ENCODE measurements at regions of chr1 and their contacts with region 1.

Region 1: GRCh38 chr1:93846211-93846991 is 32.6 kb downstream of the DNTTIP2 start:
- DNase-seq: peak; percentile 74 to 91 (median 86)
- H3K4me3 ChIP-seq: peak overlapping the region; percentile 51
- H3K4me3 Mint-ChIP-seq: peak overlapping the region; percentile 87 to 100 (median 95)
- H3K27ac ChIP-seq: peak overlapping the region; percentile 85
- H3K27ac Mint-ChIP-seq: peak overlapping the region; percentile 76 to 100 (median 95)
- H3K4me1 ChIP-seq: peaks cover 18% of the 10 kb centered on the region
- H3K4me1 Mint-ChIP-seq: peaks cover 30 to 42% (median 34%) of the 10 kb centered on the region in 3 donors
- H3K27me3 ChIP-seq: no peaks in the 10 kb centered on the region
- H3K27me3 Mint-ChIP-seq: peaks cover 0 to 10% of the 10 kb centered on the region in 2 donors

Region 2: GRCh38 chr1:93304716-93305138 is 541.7 kb before region 1 on chr1:
- CTCF ChIA-PET with region 1: interaction called, 12 read pairs
- POLR2A ChIA-PET with region 1: no interaction called
- DNase-seq: peak in 4 of 5 donors; percentile 12 to 62 (median 36)
- H3K4me3 ChIP-seq: no peak overlapping the region
- H3K4me3 Mint-ChIP-seq: no peak overlapping the region
- H3K27ac ChIP-seq: no peak overlapping the region
- H3K27ac Mint-ChIP-seq: no peak overlapping the region
- H3K4me1 ChIP-seq: no peaks in the 10 kb centered on the region
- H3K4me1 Mint-ChIP-seq: peaks cover 0 to 4% (median 0%) of the 10 kb centered on the region in 3 donors
- H3K27me3 ChIP-seq: no peaks in the 10 kb centered on the region
- H3K27me3 Mint-ChIP-seq: no peaks in the 10 kb centered on the region

Region 3: GRCh38 chr1:93345633-93346420 is 500.6 kb before region 1 on chr1 and contains the start of gene DR1:
- CTCF ChIA-PET with region 1: no interaction called
- POLR2A ChIA-PET with region 1: interaction called, 11 read pairs
- DNase-seq: peak; percentile 87 to 92 (median 89)
- H3K4me3 ChIP-seq: peak within 1 kb of the TSS; percentile 92
- H3K4me3 Mint-ChIP-seq: peak within 1 kb of the TSS; percentile 93 to 100 (median 99)
- H3K27ac ChIP-seq: peak within 1 kb of the TSS; percentile 94
- H3K27ac Mint-ChIP-seq: peak within 1 kb of the TSS; percentile 88 to 100 (median 98)
- H3K4me1 ChIP-seq: peaks cover 29% of the 10 kb centered on the region
- H3K4me1 Mint-ChIP-seq: peaks cover 38 to 53% (median 48%) of the 10 kb centered on the region in 3 donors
- H3K27me3 ChIP-seq: no peaks in the 10 kb centered on the region
- H3K27me3 Mint-ChIP-seq: peaks cover 0 to 4% of the 10 kb centered on the region in 2 donors
- total RNA-seq, gene DR1: 108 to 114 TPM

Region 4: GRCh38 chr1:93629099-93630059 is 217.0 kb before region 1 on chr1:
- CTCF ChIA-PET with region 1: interaction called, 77 read pairs
- POLR2A ChIA-PET with region 1: interaction called, 6 read pairs
- DNase-seq: peak in 3 of 5 donors; percentile 18 to 54 (median 47)
- H3K4me3 ChIP-seq: no peak overlapping the region
- H3K4me3 Mint-ChIP-seq: no peak overlapping the region
- H3K27ac ChIP-seq: no peak overlapping the region
- H3K27ac Mint-ChIP-seq: no peak overlapping the region
- H3K4me1 ChIP-seq: no peaks in the 10 kb centered on the region
- H3K4me1 Mint-ChIP-seq: no peaks in the 10 kb centered on the region
- H3K27me3 ChIP-seq: no peaks in the 10 kb centered on the region
- H3K27me3 Mint-ChIP-seq: peaks cover 0 to 2% of the 10 kb centered on the region in 2 donors

Region 5: GRCh38 chr1:93804412-93804811 is 42.0 kb before region 1 on chr1:
- CTCF ChIA-PET with region 1: no interaction called
- POLR2A ChIA-PET with region 1: no interaction called
- DNase-seq: no peak
- H3K4me3 ChIP-seq: no peak overlapping the region
- H3K4me3 Mint-ChIP-seq: no peak overlapping the region
- H3K27ac ChIP-seq: no peak overlapping the region
- H3K27ac Mint-ChIP-seq: no peak overlapping the region
- H3K4me1 ChIP-seq: no peaks in the 10 kb centered on the region
- H3K4me1 Mint-ChIP-seq: no peaks in the 10 kb centered on the region
- H3K27me3 ChIP-seq: no peaks in the 10 kb centered on the region
- H3K27me3 Mint-ChIP-seq: peaks cover 2 to 4% of the 10 kb centered on the region in 2 donors

Region 6: GRCh38 chr1:93827633-93828366 is 18.6 kb before region 1 on chr1:
- CTCF ChIA-PET with region 1: no interaction called
- POLR2A ChIA-PET with region 1: no interaction called
- DNase-seq: no peak
- H3K4me3 ChIP-seq: no peak overlapping the region
- H3K4me3 Mint-ChIP-seq: no peak overlapping the region
- H3K27ac ChIP-seq: no peak overlapping the region
- H3K27ac Mint-ChIP-seq: peak overlapping the region in 1 of 8 donors; percentile 70
- H3K4me1 ChIP-seq: no peaks in the 10 kb centered on the region
- H3K4me1 Mint-ChIP-seq: no peaks in the 10 kb centered on the region
- H3K27me3 ChIP-seq: no peaks in the 10 kb centered on the region
- H3K27me3 Mint-ChIP-seq: peaks cover 0 to 5% of the 10 kb centered on the region in 2 donors

Region 7: GRCh38 chr1:93878889-93879586 is 32.6 kb after region 1 on chr1 and contains the start of gene DNTTIP2:
- CTCF ChIA-PET with region 1: interaction called, 12 read pairs
- POLR2A ChIA-PET with region 1: interaction called, 32 read pairs
- DNase-seq: peak; percentile 79 to 91 (median 87)
- H3K4me3 ChIP-seq: peak within 1 kb of the TSS; percentile 97
- H3K4me3 Mint-ChIP-seq: peak within 1 kb of the TSS; percentile 85 to 99 (median 95)
- H3K27ac ChIP-seq: peak within 1 kb of the TSS; percentile 98
- H3K27ac Mint-ChIP-seq: peak within 1 kb of the TSS; percentile 95 to 99 (median 98)
- H3K4me1 ChIP-seq: peaks cover 34% of the 10 kb centered on the region
- H3K4me1 Mint-ChIP-seq: peaks cover 45 to 59% (median 57%) of the 10 kb centered on the region in 3 donors
- H3K27me3 ChIP-seq: no peaks in the 10 kb centered on the region
- H3K27me3 Mint-ChIP-seq: no peaks in the 10 kb centered on the region
- total RNA-seq, gene DNTTIP2: 100 to 109 TPM

Region 8: GRCh38 chr1:93909146-93910050 is 63.0 kb after region 1 on chr1 and contains the start of gene GCLM:
- CTCF ChIA-PET with region 1: interaction called, 14 read pairs
- POLR2A ChIA-PET with region 1: interaction called, 16 read pairs
- DNase-seq: peak; percentile 88 to 91 (median 91)
- H3K4me3 ChIP-seq: peak within 1 kb of the TSS; percentile 83
- H3K4me3 Mint-ChIP-seq: peak within 1 kb of the TSS; percentile 88 to 97 (median 94)
- H3K27ac ChIP-seq: peak within 1 kb of the TSS; percentile 87
- H3K27ac Mint-ChIP-seq: peak within 1 kb of the TSS; percentile 90 to 99 (median 92)
- H3K4me1 ChIP-seq: peaks cover 22% of the 10 kb centered on the region
- H3K4me1 Mint-ChIP-seq: peaks cover 37 to 52% (median 48%) of the 10 kb centered on the region in 3 donors
- H3K27me3 ChIP-seq: no peaks in the 10 kb centered on the region
- H3K27me3 Mint-ChIP-seq: peaks cover 4 to 5% of the 10 kb centered on the region in 2 donors
- total RNA-seq, gene GCLM: 24.6 to 24.8 TPM

Measured in CD8-positive, alpha-beta memory T cell (primary cell).